ENCODE measurements at regions of chr21 and their contacts with region 1.

Region 1: DNA sequence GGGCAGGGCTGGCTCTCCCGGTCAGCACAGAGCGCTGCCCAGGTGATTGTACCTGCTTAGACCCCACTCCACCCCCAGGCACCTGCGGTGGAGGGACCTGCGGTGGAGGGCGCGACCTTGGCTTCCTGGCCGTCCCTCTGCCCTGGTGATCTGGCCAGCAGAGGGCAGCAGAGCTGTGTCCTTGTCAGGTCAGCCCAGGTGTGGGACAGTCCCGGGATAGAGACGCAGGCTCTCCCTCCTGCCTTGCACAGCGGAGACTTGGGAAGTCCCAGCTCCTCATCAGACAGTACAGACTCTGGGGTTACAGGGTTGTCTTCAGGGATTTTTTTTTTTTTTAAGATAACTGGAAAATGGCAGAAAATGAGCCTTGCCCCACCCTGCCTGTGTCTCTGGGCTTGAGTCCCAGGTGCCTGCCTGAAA is 10.0 kb downstream of the SLX9 start:
- DNase-seq: peak; percentile 90
- CTCF ChIP-seq: peak; percentile 97

Region 2: DNA sequence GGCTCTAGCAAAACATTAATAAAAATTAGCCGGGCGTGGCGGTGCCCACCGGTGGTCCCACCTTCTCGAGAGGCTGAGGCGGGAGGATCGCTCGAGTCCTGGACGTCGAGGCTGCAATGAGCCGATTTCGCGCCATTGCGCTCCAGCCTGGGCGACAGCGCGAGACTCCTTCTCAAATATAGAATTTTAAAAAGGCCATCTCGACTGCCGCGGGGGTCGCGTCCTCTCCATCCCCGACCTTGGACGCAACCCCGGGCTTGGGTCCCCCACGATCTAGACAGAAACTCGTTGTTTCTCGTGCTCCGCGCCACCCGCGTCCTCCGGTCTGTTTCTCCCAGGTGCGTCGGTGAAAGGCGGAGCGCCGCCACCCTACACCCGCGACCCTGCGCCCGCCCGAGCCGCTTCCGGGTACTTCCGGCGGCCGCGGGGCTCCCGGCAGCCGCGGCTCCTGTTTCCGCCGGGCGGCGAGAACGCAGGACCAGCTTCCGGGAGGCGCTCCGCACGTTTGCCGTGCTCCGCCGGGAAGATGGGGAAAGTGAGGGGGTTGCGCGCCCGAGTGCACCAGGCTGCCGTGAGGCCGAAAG is 10.2 kb before region 1 on chr21 and contains the start of gene SLX9:
- CTCF ChIA-PET with region 1: interaction called, 25 read pairs
- POLR2A ChIA-PET with region 1: no interaction called
- DNase-seq: peak; percentile 93
- CTCF ChIP-seq: no peak

Region 3: GRCh38 chr21:44962403-44962966 is 12.7 kb after region 1 on chr21:
- CTCF ChIA-PET with region 1: interaction called, 24 read pairs
- POLR2A ChIA-PET with region 1: no interaction called
- DNase-seq: no peak
- CTCF ChIP-seq: no peak

Region 4: DNA sequence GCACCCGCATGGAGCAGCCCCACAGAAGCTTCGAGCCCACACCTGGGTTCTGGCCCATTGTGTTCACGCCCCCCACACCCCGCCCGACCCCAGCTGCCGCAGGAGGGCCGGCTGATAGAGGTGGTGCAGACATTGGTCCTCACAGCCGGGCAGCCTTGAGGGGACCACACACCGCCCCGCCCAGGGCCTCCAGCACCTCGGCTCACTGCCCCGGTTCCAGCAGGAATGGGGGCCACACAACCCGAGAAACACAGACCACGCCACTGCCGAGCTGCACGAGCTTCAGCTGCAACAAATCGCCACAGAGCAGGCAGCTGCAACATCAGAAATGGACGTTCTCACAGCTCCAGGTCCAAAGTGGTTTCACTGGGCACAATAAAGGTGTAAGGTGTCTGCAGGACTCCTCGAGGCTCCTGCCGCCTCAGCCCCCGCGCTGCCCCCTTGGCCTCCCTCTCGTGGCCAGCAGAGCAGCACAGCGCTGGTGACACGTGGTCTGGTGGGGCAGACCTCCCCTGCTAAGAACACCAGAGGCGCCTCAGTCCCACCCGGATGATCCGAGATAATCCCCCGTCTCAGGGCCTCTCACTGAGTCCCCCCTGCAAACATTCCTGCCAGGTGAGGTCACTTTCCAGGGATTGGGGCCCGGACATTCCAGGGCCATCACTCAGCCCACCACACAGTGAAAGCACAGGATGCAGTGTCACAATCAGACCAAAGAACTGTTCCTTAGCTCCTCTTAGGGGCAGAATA is 62.3 kb after region 1 on chr21:
- CTCF ChIA-PET with region 1: no interaction called
- POLR2A ChIA-PET with region 1: no interaction called
- DNase-seq: no peak
- CTCF ChIP-seq: no peak

Region 5: DNA sequence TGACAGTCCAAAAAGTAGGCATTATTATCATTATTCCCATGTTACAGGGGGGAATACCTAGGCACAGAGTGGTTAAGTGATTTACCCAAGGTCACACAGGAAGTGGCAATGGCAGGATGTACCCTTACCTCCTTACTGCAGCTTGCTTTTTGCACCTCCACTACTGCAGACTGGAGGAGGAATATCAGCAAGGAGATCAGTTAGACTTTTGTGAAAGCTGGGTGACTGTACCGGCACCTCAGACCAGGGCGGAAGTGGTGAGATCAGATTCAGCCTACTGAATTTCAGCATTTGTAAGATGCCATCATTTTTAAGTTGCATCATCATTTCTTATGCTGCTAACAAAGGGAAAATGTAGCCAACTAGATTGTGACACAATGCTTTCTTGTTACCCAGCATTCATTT is 129.1 kb after region 1 on chr21:
- CTCF ChIA-PET with region 1: interaction called, 10 read pairs
- POLR2A ChIA-PET with region 1: no interaction called
- DNase-seq: no peak
- CTCF ChIP-seq: no peak

Region 6: GRCh38 chr21:45098867-45099266 is 149.1 kb after region 1 on chr21:
- CTCF ChIA-PET with region 1: interaction called, 12 read pairs
- POLR2A ChIA-PET with region 1: no interaction called
- DNase-seq: peak; percentile 56
- CTCF ChIP-seq: peak; percentile 60

Region 7: DNA sequence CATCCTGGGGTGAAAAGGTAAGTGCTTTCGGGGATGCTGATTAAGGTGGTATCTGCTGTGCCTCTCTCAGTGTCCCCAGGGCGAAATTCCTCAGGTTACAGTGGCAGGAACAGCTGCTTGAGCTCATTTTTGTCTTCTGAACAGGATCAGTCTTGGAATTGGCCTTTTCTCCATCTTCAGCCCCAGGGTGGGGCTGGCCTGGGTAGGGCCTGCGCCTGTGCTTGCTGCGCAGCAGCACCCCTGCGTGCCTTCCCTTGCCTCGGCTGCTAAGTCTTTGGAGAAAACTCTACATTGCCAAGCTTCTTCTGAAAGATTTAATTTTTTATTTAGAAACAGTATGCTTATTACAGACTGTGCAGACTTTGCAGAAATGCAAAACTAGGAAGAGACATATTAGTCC is 166.3 kb after region 1 on chr21:
- CTCF ChIA-PET with region 1: interaction called, 11 read pairs
- POLR2A ChIA-PET with region 1: no interaction called
- DNase-seq: no peak
- CTCF ChIP-seq: no peak

Region 8: DNA sequence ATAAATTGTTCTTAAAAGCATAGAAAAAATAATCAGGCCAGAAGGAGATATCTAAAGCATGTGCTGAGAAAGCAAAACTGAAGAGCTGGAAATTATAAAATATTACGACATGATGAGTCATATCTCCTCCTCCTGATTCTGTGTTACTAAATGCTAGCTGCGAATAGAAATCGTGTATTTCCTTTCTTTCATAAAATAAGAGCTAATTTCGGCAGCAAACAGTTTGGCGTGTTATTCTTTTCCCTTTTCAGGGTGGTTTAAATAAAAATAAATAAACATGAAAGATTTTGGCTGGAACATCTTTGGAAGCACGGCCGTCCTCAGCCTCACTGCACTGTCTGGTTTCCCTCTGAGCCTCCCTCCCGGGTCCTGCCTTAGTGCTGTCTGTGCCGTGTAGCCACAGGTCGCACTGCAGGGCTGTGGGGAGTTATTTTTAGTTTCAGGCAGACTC is 180.6 kb after region 1 on chr21:
- CTCF ChIA-PET with region 1: interaction called, 313 read pairs
- POLR2A ChIA-PET with region 1: no interaction called
- DNase-seq: no peak
- CTCF ChIP-seq: no peak

Region 9: GRCh38 chr21:45236481-45236880 is 286.7 kb after region 1 on chr21:
- CTCF ChIA-PET with region 1: no interaction called
- POLR2A ChIA-PET with region 1: no interaction called
- DNase-seq: no peak
- CTCF ChIP-seq: peak; percentile 49

Measured in GM10248 (cell line).